ENCODE measurements at regions of chr17 and their contacts with region 1.

Region 1: DNA sequence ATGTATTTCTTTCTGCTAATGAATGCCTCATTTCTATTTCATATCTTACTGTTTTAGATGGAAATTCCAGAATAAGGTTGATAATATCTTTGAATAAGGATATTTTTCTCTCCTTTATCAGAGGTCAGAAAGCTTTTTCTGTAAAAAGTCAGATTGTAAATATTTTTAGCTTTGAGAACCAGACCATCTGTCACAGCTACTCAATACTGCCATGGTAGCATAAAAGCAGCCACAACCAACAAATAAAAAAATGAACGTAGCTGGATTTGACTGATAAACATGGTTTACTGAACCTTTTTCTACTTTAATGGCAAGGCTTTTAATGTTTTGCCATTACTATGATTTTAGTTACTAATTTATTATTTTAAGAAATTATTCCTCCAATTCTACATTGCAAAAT is 217.4 kb upstream of the COX10 start:
- DNase-seq: no peak
- H3K4me3 Mint-ChIP-seq: no peak overlapping the region
- H3K27ac Mint-ChIP-seq: no peak overlapping the region
- H3K4me1 Mint-ChIP-seq: no peaks in the 10 kb centered on the region
- H3K27me3 Mint-ChIP-seq: no peaks in the 10 kb centered on the region

Region 2: DNA sequence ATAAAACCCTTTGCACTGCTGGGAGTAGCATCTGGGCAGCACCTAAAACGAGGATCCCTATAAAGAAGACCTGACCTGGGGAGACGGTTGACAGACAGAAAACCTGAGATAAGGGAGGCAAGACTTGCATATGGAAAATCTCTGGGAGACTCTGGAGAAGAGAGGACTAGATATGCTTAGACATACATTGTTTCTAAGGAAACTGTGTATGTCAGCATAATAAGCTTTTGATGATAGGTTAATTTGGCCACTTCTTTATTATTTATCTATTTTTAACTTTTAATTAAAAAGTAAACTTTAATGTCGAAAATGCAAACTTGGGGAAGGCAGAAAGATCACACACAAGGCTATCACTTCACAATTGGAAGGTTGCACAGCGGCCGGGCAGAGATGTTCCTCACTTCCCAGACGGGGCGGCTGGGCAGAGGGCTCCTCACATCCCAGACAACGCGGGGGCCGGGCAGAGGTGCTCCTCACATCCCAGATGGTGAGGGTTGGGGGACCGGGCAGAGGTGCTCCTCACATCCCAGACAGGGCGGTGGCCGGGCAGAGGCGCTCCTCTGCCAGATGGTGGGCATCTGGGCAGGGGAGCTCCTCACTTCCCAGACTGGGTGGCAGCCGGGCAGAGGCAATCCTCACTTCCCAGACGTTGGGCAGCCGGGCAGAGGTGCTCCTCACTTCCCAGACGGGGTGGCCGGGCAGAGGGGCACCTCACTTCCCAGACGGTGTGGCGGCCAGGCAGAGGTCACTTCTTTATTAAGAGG is 185.8 kb before region 1 on chr17:
- CTCF ChIA-PET with region 1: no interaction called
- POLR2A ChIA-PET with region 1: no interaction called
- DNase-seq: no peak
- H3K4me3 Mint-ChIP-seq: no peak overlapping the region
- H3K27ac Mint-ChIP-seq: no peak overlapping the region
- H3K4me1 Mint-ChIP-seq: no peaks in the 10 kb centered on the region
- H3K27me3 Mint-ChIP-seq: no peaks in the 10 kb centered on the region

Region 3: GRCh38 chr17:13750816-13751722 is 100.8 kb before region 1 on chr17:
- CTCF ChIA-PET with region 1: no interaction called
- POLR2A ChIA-PET with region 1: no interaction called
- DNase-seq: no peak
- H3K4me3 Mint-ChIP-seq: no peak overlapping the region
- H3K27ac Mint-ChIP-seq: no peak overlapping the region
- H3K4me1 Mint-ChIP-seq: no peaks in the 10 kb centered on the region
- H3K27me3 Mint-ChIP-seq: no peaks in the 10 kb centered on the region

Region 4: GRCh38 chr17:13909901-13910519 is 58.1 kb after region 1 on chr17:
- CTCF ChIA-PET with region 1: no interaction called
- POLR2A ChIA-PET with region 1: interaction called, 11 read pairs
- DNase-seq: no peak
- H3K4me3 Mint-ChIP-seq: no peak overlapping the region
- H3K27ac Mint-ChIP-seq: no peak overlapping the region
- H3K4me1 Mint-ChIP-seq: no peaks in the 10 kb centered on the region
- H3K27me3 Mint-ChIP-seq: no peaks in the 10 kb centered on the region

Measured in activated CD4-positive, alpha-beta T cell treated with anti-CD3 and anti-CD28 coated beads, Interleukin-2, amount 10 ng/mL, durations not matched to agents 7 days and 5 days (primary cell).